Kidney (tissue), 22 donors: ENCODE measurements at regions of chr6 and their contacts with region 1.

Region 1: DNA sequence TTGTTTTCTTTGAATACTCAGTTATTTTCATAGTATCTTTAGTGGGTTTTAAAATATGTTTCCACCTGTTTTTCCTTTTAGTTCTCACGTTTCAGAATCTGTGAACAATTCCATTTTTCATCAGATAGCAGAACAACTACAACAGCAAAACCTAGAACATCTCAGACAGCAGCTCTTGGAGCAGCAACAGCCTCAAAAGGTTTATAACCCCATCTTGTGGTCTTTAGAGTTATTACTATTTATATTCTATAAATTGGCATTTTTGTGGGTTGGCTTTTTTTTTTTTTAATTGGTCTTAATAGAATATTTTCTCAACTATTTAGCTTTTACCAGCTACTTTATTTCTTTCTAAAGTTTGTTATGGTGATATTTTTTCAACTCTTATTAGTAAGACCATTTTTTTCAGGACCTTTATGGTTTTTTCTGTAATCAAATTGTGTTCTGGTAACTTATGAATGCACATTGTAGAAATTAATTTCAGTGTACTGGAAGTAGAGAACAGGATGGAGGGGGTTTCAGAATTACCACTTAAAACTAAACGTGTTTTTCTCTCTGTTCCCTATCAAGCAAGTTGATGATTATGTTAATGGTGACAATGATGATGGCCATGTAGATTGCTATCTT is 72.2 kb downstream of the SCAF8 start:
- DNase-seq: peak in 2 of 5 donors; percentile 22 to 47
- H3K4me3 ChIP-seq: no peak overlapping the region
- H3K27ac ChIP-seq: no peak overlapping the region
- H3K4me1 ChIP-seq: no peaks in the 10 kb centered on the region
- H3K27me3 ChIP-seq: no peaks in the 10 kb centered on the region
- CTCF ChIP-seq: peak; percentile 29

Region 2: GRCh38 chr6:154343473-154344308 is 461.7 kb before region 1 on chr6:
- intact Hi-C with region 1: no loop called
- DNase-seq: peak; percentile 62 to 91 (median 75)
- H3K4me3 ChIP-seq: peak overlapping the region; percentile 6 to 23 (median 14)
- H3K27ac ChIP-seq: peak overlapping the region; percentile 51 to 76
- H3K4me1 ChIP-seq: peaks cover 0 to 5% (median 5%) of the 10 kb centered on the region in 3 donors
- H3K27me3 ChIP-seq: no peaks in the 10 kb centered on the region
- CTCF ChIP-seq: peak; percentile 40

Region 3: GRCh38 chr6:154569156-154569862 is 236.1 kb before region 1 on chr6:
- intact Hi-C with region 1: no loop called
- DNase-seq: no peak
- H3K4me3 ChIP-seq: no peak overlapping the region
- H3K27ac ChIP-seq: no peak overlapping the region
- H3K4me1 ChIP-seq: peaks cover 0 to 10% (median 0%) of the 10 kb centered on the region in 3 donors
- H3K27me3 ChIP-seq: no peaks in the 10 kb centered on the region
- CTCF ChIP-seq: no peak

Region 4: GRCh38 chr6:154675602-154676088 is 129.8 kb before region 1 on chr6:
- intact Hi-C with region 1: loop called (anchors 10 kb)
- DNase-seq: peak; percentile 86 to 98 (median 95)
- H3K4me3 ChIP-seq: no peak overlapping the region
- H3K27ac ChIP-seq: no peak overlapping the region
- H3K4me1 ChIP-seq: no peaks in the 10 kb centered on the region
- H3K27me3 ChIP-seq: no peaks in the 10 kb centered on the region
- CTCF ChIP-seq: peak; percentile 99

Region 5: GRCh38 chr6:154928325-154928922 is 123.0 kb after region 1 on chr6:
- intact Hi-C with region 1: no loop called
- DNase-seq: peak in 3 of 5 donors; percentile 71 to 89 (median 83)
- H3K4me3 ChIP-seq: no peak overlapping the region
- H3K27ac ChIP-seq: no peak overlapping the region
- H3K4me1 ChIP-seq: no peaks in the 10 kb centered on the region
- H3K27me3 ChIP-seq: no peaks in the 10 kb centered on the region
- CTCF ChIP-seq: peak; percentile 85